HCT116 (cell line): ENCODE measurements at regions of chr19 and their contacts with region 1.

Region 1: GRCh38 chr19:16160943-16161560 is 12.3 kb downstream of the CIB3 start:
- DNase-seq: peak; percentile 95
- ATAC-seq: peak; percentile 79
- H3K4me3 ChIP-seq: peak overlapping the region; percentile 16 to 44
- H3K27ac ChIP-seq: peak overlapping the region; percentile 79
- H3K4me1 ChIP-seq: peaks cover 45 to 59% of the 10 kb centered on the region in 2 experiments
- H3K27me3 ChIP-seq: no peaks in the 10 kb centered on the region
- CTCF ChIP-seq: no peak
- POLR2A ChIP-seq: no peak
- RAD21 ChIP-seq: no peak; the same call in 1 of the 2 replicates

Region 2: DNA sequence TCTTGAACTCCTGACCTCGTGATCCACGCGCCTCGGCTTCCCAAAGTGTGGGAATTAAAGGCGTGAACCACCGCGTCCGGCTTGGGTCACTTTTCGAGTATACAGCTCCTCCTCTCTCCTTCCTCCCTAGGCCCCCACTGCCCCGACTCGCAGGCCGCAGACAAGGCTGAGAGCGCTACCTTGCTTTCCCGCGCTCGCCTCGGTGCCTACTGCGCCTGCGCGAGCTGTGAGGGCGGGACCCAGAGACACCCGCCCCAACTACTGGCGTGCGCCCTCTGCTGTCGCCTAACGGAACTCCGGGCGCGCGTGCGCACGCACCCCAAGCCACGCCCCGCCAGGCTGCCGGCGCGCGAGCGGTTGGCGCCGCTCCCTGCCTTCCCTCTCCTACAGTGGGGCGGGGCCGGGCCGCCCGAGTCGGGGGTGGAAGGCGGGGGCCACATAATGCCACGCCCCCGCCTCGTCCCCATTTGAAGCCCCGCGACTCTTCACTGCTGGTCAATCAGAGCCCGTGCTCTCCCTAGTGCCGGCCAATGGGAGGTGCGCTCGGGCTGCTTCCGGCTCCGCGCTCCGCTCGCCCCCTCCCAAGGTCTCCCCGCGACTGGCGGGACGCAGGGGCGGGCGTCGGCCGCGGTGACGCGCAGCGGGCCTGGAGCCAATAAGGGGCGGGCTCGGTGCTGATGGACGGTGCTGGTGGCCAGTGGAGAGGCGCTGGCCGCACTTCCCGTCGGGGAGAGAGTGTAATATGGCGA is 49.7 kb before region 1 on chr19 and contains the start of gene RAB8A:
- CTCF ChIA-PET with region 1: interaction called, 7 read pairs
- POLR2A ChIA-PET with region 1: interaction called, 3 read pairs
- RAD21 ChIA-PET with region 1: no interaction called
- intact Hi-C with region 1: loop called (anchors 2 kb)
- DNase-seq: peak; percentile 97
- ATAC-seq: peak; percentile 95
- H3K4me3 ChIP-seq: peak within 1 kb of the TSS; percentile 74 to 97
- H3K27ac ChIP-seq: peak within 1 kb of the TSS; percentile 88
- H3K4me1 ChIP-seq: peaks cover 14 to 37% of the 10 kb centered on the region in 2 experiments
- H3K27me3 ChIP-seq: no peaks in the 10 kb centered on the region
- CTCF ChIP-seq: peak; percentile 77 to 85 (median 85)
- POLR2A ChIP-seq: no peak
- RAD21 ChIP-seq: peak; percentile 78
- total RNA-seq, gene RAB8A: 116 TPM

Region 3: GRCh38 chr19:16203256-16204004 is 42.4 kb after region 1 on chr19:
- CTCF ChIA-PET with region 1: no interaction called
- POLR2A ChIA-PET with region 1: no interaction called
- RAD21 ChIA-PET with region 1: no interaction called
- intact Hi-C with region 1: no loop called
- DNase-seq: no peak
- ATAC-seq: no peak
- H3K4me3 ChIP-seq: no peak overlapping the region
- H3K27ac ChIP-seq: no peak overlapping the region
- H3K4me1 ChIP-seq: peaks cover 6 to 9% of the 10 kb centered on the region in 2 experiments; a peak in 3 of 4 replicates
- H3K27me3 ChIP-seq: no peaks in the 10 kb centered on the region
- CTCF ChIP-seq: no peak
- POLR2A ChIP-seq: no peak
- RAD21 ChIP-seq: no peak